GM18951 (cell line): ENCODE measurements at regions of chr3 and their contacts with region 1.

Region 1: DNA sequence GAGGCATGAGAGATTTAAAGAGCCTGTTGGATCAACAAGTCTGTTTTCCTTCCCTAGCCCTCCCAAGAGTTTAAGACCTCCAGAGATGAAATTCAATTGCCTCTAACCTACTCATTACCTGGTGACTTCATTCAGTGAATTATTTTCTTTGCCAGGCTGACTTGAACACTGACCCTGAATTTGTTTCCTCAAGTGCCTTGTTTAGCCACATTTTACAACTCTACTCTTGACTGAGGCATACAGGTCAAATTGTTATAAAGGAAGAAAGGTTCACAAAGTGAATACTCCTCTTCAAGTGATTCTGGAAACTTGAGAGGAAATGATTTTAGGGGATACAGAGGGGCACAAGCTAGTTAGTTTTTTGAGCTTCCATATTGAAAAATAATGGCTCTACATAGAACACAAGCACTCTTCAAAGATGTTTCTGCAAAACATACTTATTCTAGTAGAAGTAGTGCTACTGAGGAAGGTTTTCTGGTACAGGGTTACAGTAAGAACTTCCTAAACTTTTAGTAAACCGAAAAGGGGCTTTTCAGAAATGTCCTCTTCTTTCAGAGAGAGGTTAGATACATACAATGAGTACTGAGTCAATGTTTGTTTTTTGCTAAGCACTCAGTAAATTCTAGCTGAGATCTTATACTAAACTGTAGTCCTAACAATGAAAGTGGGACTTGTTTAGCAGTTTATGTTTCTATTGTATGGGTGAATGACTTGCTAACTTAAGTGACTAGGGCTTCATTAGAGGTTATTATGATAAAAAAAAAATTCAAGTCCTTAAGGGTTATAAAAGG is 137.4 kb upstream of the SATB1 start:
- POLR2A ChIP-seq: no peak

Region 2: GRCh38 chr3:18363338-18363737 is 199.2 kb before region 1 on chr3:
- in situ Hi-C with region 1: no loop called
- POLR2A ChIP-seq: no peak

Region 3: GRCh38 chr3:18758047-18758704 is 195.6 kb after region 1 on chr3:
- in situ Hi-C with region 1: loop called (anchors 10 kb)
- POLR2A ChIP-seq: no peak

Region 4: DNA sequence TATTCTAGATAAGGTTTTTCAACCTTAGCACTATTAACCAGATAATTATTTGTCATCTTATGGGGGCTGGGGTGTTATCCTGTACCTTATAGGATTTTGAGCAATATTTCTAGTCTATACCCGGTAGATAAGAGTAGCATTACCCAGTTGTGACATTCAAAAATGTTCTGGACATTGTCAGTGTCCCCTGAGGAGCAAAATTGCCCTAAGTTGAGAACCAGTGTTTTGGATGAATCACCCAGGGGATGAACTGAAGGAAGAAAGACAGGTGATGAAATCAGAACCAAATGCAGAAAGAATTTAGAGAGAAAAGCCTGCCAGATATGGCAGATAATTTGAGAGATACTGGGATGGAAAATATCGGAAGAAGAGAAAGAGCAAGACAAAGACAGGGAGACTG is 644.0 kb after region 1 on chr3:
- in situ Hi-C with region 1: no loop called
- POLR2A ChIP-seq: no peak